GM12878 (cell line): ENCODE measurements at regions of chr12 and their contacts with region 1.

Region 1: DNA sequence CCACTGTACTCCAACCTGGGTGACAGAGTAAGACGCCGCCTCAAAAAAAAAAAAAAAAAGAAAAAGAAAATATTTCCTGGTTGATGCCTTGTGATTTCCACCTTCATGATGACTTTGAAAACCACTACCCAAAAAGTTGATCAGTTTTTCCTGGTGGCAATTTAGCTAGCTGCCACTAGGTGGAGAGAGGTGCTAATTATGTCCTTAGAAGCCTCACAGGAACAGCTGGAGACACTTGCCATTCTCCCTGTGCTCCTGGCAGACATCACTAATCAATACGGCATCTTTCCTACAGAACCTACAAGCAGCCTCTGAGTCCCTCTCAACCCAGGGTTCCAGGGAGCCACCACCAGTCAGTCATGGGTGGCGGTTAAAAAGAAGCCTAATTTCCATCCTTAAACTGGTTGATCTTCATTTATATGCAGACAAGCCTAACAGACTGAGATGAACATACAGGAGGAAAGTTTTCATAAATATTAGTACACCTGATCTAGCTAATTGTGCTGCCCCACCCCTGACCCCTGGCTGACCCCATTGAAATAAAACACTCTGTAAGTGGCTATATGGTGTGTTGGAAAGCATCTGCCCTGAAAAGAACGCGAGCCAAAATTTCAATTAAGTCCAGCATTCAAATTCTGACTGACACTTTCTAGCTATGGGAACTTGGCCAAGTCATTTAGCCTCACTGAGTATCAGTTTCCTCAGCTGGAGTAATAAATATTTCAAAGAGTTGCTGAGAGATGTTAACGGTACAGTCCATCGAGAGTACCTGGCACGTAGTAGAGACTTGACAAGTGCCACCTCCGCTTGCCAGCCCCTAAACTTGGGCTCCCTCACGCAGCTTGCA is 6.2 kb upstream of the OAS1 start:
- DNase-seq: no peak
- ATAC-seq: peak; percentile 75
- H3K4me3 ChIP-seq: no peak overlapping the region
- H3K27ac ChIP-seq: no peak overlapping the region
- H3K4me1 ChIP-seq: peaks cover 6% of the 10 kb centered on the region
- H3K27me3 ChIP-seq: no peaks in the 10 kb centered on the region
- CTCF ChIP-seq: peak; percentile 68 to 84 (median 73)
- EP300 ChIP-seq: no peak
- POLR2A ChIP-seq: no peak
- RAD21 ChIP-seq: peak; percentile 82

Region 2: DNA sequence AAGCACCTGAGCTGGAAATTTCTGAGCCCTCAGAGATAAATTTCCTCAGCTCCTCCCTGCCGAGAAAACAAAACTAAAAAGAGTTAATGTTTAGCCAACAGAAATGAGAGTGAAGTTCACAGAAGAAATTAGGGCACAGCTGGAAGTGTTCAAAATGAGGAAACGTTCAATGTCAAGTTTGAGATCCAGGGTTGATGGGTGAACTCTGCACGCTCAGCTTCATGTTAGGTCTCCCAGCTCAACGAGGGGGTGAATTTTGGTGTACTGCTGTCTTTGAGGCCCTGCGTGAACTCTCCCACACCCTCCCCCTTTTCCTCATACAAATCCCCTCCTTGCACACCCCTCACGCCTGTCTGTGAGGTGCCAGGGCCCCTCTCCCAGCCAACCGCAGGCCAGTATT is 24.5 kb after region 1 on chr12:
- CTCF ChIA-PET with region 1: interaction called, 31 read pairs
- POLR2A ChIA-PET with region 1: interaction called, 40 read pairs
- RAD21 ChIA-PET with region 1: interaction called, 44 read pairs
- SMC1A ChIA-PET with region 1: interaction called, 52 read pairs
- in situ Hi-C with region 1: no loop called
- intact Hi-C with region 1: no loop called
- DNase-seq: peak; percentile 36
- ATAC-seq: peak; percentile 92
- H3K4me3 ChIP-seq: no peak overlapping the region
- H3K27ac ChIP-seq: no peak overlapping the region
- H3K4me1 ChIP-seq: no peaks in the 10 kb centered on the region
- H3K27me3 ChIP-seq: no peaks in the 10 kb centered on the region
- CTCF ChIP-seq: no peak
- EP300 ChIP-seq: no peak
- POLR2A ChIP-seq: no peak
- RAD21 ChIP-seq: no peak

Region 3: GRCh38 chr12:112937741-112938719 is 37.5 kb after region 1 on chr12 and contains the start of gene OAS3:
- CTCF ChIA-PET with region 1: interaction called, 16 read pairs
- POLR2A ChIA-PET with region 1: interaction called, 4 read pairs
- RAD21 ChIA-PET with region 1: interaction called, 5 read pairs
- SMC1A ChIA-PET with region 1: interaction called, 36 read pairs
- in situ Hi-C with region 1: no loop called
- intact Hi-C with region 1: no loop called
- DNase-seq: peak; percentile 45
- ATAC-seq: peak; percentile 81
- H3K4me3 ChIP-seq: peak within 1 kb of the TSS; percentile 70
- H3K27ac ChIP-seq: peak within 1 kb of the TSS; percentile 67
- H3K4me1 ChIP-seq: peaks cover 8% of the 10 kb centered on the region
- H3K27me3 ChIP-seq: no peaks in the 10 kb centered on the region
- CTCF ChIP-seq: 0 out of 6 replicates have a peak, but pooled peaks of 1 of the 3 experiments have one; percentile 3
- EP300 ChIP-seq: no peak
- POLR2A ChIP-seq: peak; percentile 49; the same call in 1 of the 2 replicates
- RAD21 ChIP-seq: no peak
- polyA plus RNA-seq, gene OAS3: 5.1 to 5.9 TPM

Region 4: GRCh38 chr12:112992541-112993398 is 92.2 kb after region 1 on chr12:
- CTCF ChIA-PET with region 1: interaction called, 35 read pairs
- POLR2A ChIA-PET with region 1: no interaction called
- RAD21 ChIA-PET with region 1: interaction called, 19 read pairs
- SMC1A ChIA-PET with region 1: interaction called, 19 read pairs
- in situ Hi-C with region 1: no loop called
- intact Hi-C with region 1: loop called (anchors 5 kb)
- DNase-seq: no peak
- ATAC-seq: peak; percentile 74
- H3K4me3 ChIP-seq: no peak overlapping the region
- H3K27ac ChIP-seq: no peak overlapping the region
- H3K4me1 ChIP-seq: no peaks in the 10 kb centered on the region
- H3K27me3 ChIP-seq: no peaks in the 10 kb centered on the region
- CTCF ChIP-seq: peak; percentile 81 to 99 (median 83); a peak in 5 of 6 replicates
- EP300 ChIP-seq: no peak
- POLR2A ChIP-seq: no peak
- RAD21 ChIP-seq: peak; percentile 81

Region 5: GRCh38 chr12:113040722-113041171 is 140.2 kb after region 1 on chr12:
- CTCF ChIA-PET with region 1: interaction called, 11 read pairs
- POLR2A ChIA-PET with region 1: interaction called, 6 read pairs
- RAD21 ChIA-PET with region 1: no interaction called
- SMC1A ChIA-PET with region 1: no interaction called
- in situ Hi-C with region 1: no loop called
- intact Hi-C with region 1: no loop called
- DNase-seq: no peak
- ATAC-seq: no peak
- H3K4me3 ChIP-seq: no peak overlapping the region
- H3K27ac ChIP-seq: no peak overlapping the region
- H3K4me1 ChIP-seq: no peaks in the 10 kb centered on the region
- H3K27me3 ChIP-seq: no peaks in the 10 kb centered on the region
- CTCF ChIP-seq: no peak
- EP300 ChIP-seq: no peak
- POLR2A ChIP-seq: no peak
- RAD21 ChIP-seq: no peak

Region 6: GRCh38 chr12:113161414-113162016 is 261.0 kb after region 1 on chr12:
- CTCF ChIA-PET with region 1: no interaction called
- POLR2A ChIA-PET with region 1: no interaction called
- RAD21 ChIA-PET with region 1: no interaction called
- SMC1A ChIA-PET with region 1: no interaction called
- in situ Hi-C with region 1: no loop called
- intact Hi-C with region 1: no loop called
- DNase-seq: no peak
- ATAC-seq: peak; percentile 72
- H3K4me3 ChIP-seq: no peak overlapping the region
- H3K27ac ChIP-seq: no peak overlapping the region
- H3K4me1 ChIP-seq: no peaks in the 10 kb centered on the region
- H3K27me3 ChIP-seq: no peaks in the 10 kb centered on the region
- CTCF ChIP-seq: no peak
- EP300 ChIP-seq: no peak
- POLR2A ChIP-seq: peak; percentile 58
- RAD21 ChIP-seq: no peak